PC-3 (cell line): ENCODE measurements at regions of chr4 and their contacts with region 1.

Region 1: GRCh38 chr4:7890635-7891393 is 48.8 kb downstream of the AFAP1 start:
- DNase-seq: peak; percentile 75
- ATAC-seq: peak; percentile 80
- H3K4me3 ChIP-seq: no peak overlapping the region; the same call in 1 of the 2 replicates
- H3K27ac ChIP-seq: peak overlapping the region; percentile 71
- H3K4me1 ChIP-seq: peaks cover 34% of the 10 kb centered on the region
- H3K27me3 ChIP-seq: no peaks in the 10 kb centered on the region
- CTCF ChIP-seq: no peak

Region 2: DNA sequence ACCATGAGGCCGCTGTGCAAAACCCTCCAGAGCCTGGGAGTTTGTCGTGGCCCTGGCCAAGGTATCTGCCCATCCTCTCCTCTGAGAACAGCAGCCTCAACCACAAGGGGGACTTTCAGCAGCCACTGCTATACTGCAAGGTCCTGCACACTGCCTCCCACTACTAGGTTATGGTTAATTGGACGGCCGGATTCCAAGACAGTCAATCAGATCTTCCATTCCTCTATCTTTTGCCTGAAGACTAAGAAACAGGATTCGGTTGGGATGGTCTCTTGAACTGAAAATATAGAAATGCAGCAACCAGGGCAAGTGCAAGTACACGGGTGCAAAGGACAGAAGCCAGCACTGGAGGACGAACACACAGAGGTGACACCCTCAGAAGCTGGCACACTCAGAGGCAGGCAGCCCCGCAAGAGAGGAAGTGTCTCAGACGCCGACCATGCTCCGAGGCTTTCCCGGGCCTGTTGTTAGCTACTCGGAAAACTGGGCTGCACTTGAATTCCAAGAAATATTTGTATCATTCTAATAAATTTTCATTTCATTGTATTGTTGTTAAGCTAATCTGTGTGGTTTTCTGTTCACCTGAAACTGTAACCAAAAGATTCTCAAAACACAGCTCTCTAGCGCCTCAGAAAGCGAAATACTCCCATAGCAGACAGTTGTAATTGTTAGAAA is 14.5 kb before region 1 on chr4:
- CTCF ChIA-PET with region 1: no interaction called
- POLR2A ChIA-PET with region 1: no interaction called
- intact Hi-C with region 1: no loop called
- DNase-seq: no peak
- ATAC-seq: peak; percentile 25; the same call in 1 of the 2 replicates
- H3K4me3 ChIP-seq: no peak overlapping the region
- H3K27ac ChIP-seq: no peak overlapping the region
- H3K4me1 ChIP-seq: peaks cover 57% of the 10 kb centered on the region
- H3K27me3 ChIP-seq: no peaks in the 10 kb centered on the region
- CTCF ChIP-seq: peak; percentile 45; the same call in 1 of the 2 replicates

Region 3: GRCh38 chr4:7924163-7924562 is 33.3 kb after region 1 on chr4:
- CTCF ChIA-PET with region 1: no interaction called
- POLR2A ChIA-PET with region 1: no interaction called
- intact Hi-C with region 1: loop called (anchors 5 kb)
- DNase-seq: no peak
- ATAC-seq: no peak
- H3K4me3 ChIP-seq: no peak overlapping the region
- H3K27ac ChIP-seq: no peak overlapping the region
- H3K4me1 ChIP-seq: peaks cover 13% of the 10 kb centered on the region
- H3K27me3 ChIP-seq: no peaks in the 10 kb centered on the region
- CTCF ChIP-seq: no peak

Region 4: DNA sequence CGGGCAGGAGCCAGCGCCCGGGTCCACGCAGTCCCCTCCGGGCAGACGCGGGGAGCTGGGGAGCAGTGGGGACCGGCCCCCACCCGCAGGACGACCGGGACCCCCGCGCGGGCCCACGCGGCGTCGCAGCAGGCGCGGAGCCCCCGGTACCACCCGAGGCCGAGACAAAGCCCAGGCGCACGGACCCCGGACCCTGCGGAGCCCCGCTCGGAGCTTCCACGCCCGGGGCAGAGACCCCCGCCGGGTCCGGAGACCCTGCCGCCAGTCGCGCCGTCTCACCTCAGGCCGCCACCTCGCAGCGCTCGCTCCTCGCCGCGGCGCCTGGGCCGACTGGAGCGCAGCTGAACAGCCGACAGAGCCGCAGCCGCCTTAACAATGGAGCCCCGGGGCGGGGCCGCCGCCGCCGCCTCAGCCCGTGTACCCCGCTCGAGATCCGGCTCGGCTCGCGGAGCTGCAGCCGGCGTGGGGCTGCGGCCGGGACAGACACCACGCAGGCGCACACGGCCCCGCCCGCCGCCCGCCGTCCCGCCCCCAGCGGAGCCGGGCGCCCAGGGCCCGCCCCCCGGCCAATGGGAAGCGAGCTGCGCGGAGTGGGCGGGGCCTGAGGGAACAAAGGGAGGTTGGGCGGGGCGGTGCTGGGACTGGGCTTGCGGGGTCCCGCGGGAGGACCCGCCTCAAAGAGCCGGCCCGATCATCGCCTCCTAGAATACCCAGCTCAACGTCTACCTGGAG is 48.7 kb after region 1 on chr4 and contains the start of gene AFAP1:
- CTCF ChIA-PET with region 1: no interaction called
- POLR2A ChIA-PET with region 1: no interaction called
- intact Hi-C with region 1: no loop called
- DNase-seq: peak; percentile 83
- ATAC-seq: peak; percentile 79
- H3K4me3 ChIP-seq: peak within 1 kb of the TSS; percentile 93
- H3K27ac ChIP-seq: peak within 1 kb of the TSS; percentile 51
- H3K4me1 ChIP-seq: peaks cover 43% of the 10 kb centered on the region
- H3K27me3 ChIP-seq: no peaks in the 10 kb centered on the region
- CTCF ChIP-seq: no peak
- total RNA-seq, gene AFAP1: 42.1 and 51.4 TPM in 2 replicates

Region 5: DNA sequence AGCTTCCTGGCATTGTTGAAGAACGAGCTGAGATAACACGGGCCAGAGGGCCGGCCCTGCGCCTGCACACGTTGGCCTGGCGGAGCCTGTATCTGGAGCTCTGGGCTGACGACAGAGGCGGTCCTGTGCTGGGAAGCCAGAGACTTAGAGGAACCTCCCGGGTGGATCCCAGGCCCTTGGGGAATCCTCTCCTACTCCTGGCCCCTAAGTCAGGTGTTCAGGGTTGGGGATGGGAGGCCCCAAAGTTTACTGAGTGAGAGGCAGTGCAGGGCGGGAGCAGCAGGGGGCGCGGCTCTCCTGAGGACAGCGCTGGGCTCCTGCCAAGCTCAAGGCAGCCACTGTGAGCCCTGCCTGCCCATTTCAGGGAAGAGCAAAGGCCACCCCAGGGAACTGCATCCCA is 376.3 kb after region 1 on chr4:
- CTCF ChIA-PET with region 1: no interaction called
- POLR2A ChIA-PET with region 1: no interaction called
- intact Hi-C with region 1: no loop called
- DNase-seq: peak; percentile 68
- ATAC-seq: peak; percentile 68
- H3K4me3 ChIP-seq: no peak overlapping the region
- H3K27ac ChIP-seq: no peak overlapping the region
- H3K4me1 ChIP-seq: no peaks in the 10 kb centered on the region
- H3K27me3 ChIP-seq: no peaks in the 10 kb centered on the region
- CTCF ChIP-seq: peak; percentile 72